CD8-positive, alpha-beta T cell (primary cell): ENCODE measurements at regions of chr20 and their contacts with region 1.

Region 1: GRCh38 chr20:50189681-50190582 is 698 bp upstream of the CEBPB start:
- DNase-seq: peak; percentile 61 to 89 (median 83)
- ATAC-seq: peak; percentile 60
- H3K4me3 ChIP-seq: peak overlapping the region; percentile 29 to 72
- H3K4me3 Mint-ChIP-seq: peak overlapping the region; percentile 65
- H3K27ac ChIP-seq: peak overlapping the region; percentile 19 to 91
- H3K27ac Mint-ChIP-seq: peak overlapping the region; percentile 45
- H3K4me1 ChIP-seq: peaks cover 19% of the 10 kb centered on the region
- H3K4me1 Mint-ChIP-seq: peaks cover 24% of the 10 kb centered on the region
- H3K27me3 ChIP-seq: no peaks in the 10 kb centered on the region
- H3K27me3 Mint-ChIP-seq: peaks cover 8% of the 10 kb centered on the region
- CTCF ChIP-seq: peak; percentile 65

Region 2: DNA sequence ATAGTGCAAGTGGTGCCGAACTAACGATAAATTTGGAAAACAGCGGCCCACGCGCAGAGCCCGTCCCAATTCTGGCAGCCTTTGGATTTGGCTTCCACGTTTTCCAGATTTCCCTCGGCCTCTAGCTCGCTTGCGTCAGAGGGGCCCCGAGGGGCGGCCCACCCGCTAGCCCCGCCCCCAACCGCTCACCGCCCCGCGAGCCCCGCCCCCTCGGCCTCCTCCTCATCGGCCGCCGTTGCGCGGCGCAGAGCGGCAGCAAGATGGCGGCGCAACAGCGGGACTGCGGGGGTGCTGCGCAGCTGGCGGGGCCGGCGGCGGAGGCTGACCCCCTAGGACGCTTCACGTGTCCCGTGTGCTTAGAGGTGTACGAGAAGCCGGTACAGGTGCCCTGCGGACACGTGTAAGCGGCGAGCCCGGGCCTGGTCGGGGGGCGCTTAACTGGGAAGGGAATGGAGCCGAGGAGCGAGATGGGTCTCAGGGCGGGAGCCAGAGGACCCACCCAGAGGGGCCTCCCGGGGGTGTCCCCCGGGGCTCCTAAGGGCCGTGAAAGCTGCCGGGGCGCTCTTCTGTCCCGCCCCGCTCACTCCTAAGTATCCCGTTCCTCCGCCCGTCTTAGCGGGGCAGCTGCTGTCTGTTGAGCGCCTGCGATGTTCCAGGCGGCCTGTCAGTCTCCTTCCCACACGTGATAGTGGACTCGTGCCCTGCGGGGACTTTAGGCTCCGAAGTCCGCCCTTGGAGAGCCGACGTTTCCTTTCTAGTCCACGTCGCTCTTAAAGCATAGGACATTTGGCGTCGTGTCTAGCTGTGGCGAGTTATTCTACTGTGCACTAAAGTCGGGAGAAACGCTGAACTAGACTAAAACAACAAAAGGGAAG is 253.5 kb before region 1 on chr20 and contains the start of gene RNF114:
- CTCF ChIA-PET with region 1: no interaction called
- POLR2A ChIA-PET with region 1: no interaction called
- intact Hi-C with region 1: loop called in 1 of 2 experiments (anchors 1 kb)
- DNase-seq: peak; percentile 82 to 95 (median 90)
- ATAC-seq: peak; percentile 96
- H3K4me3 ChIP-seq: peak within 1 kb of the TSS; percentile 96 to 99
- H3K4me3 Mint-ChIP-seq: peak within 1 kb of the TSS; percentile 98
- H3K27ac ChIP-seq: peak within 1 kb of the TSS; percentile 89 to 95
- H3K27ac Mint-ChIP-seq: peak within 1 kb of the TSS; percentile 96
- H3K4me1 ChIP-seq: peaks cover 30% of the 10 kb centered on the region
- H3K4me1 Mint-ChIP-seq: peaks cover 46% of the 10 kb centered on the region
- H3K27me3 ChIP-seq: no peaks in the 10 kb centered on the region
- H3K27me3 Mint-ChIP-seq: no peaks in the 10 kb centered on the region
- CTCF ChIP-seq: no peak
- total RNA-seq, gene RNF114: 137 to 151 TPM

Region 3: DNA sequence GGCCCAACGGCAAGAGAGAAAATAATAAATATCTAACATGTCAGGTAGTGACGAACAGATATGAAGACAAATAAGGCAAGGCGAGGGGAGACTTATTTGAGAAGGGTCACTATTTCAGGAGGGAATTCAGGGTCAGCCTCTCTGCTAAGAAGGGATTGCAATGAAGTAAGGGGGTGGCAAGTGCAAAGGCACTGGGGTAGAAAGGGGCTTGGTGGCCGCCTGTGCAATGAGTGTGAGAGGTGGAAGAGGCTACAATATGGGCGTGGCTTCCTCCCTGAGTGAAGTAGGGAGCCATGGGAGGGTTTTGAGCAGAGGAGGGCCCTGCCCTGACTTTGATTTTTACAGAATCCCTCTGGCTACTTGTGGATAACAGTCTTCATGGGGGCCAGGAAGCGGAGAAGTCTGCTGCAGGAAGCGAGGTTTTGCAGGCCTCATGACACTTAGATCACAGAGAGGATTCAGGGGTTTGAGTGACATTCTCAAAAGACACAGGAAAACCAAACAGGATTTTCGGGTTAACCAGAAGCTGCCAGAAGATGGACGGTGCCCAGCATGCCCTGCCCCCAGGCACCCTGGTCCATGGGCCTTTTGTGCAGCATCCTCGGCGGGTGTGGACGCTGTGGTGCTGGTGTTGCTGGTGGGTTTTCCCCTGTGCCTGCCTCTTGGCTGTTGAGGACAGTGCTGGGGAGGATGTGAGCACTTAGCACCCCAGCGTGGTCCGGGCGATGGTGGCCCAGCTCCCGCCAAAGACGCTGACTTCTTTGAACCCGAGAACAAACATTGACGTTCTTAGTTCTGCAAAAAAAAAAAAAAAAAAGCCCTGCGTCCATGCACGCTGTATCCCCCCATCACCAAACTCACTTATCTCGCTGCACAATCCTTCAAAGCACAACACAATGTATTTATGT is 196.1 kb after region 1 on chr20:
- CTCF ChIA-PET with region 1: no interaction called
- POLR2A ChIA-PET with region 1: interaction called, 3 read pairs
- intact Hi-C with region 1: loop called (anchors 2 kb)
- DNase-seq: peak; percentile 37 to 94 (median 66)
- ATAC-seq: peak; percentile 87
- H3K4me3 ChIP-seq: peak overlapping the region in 1 of 2 experiments; percentile 17
- H3K4me3 Mint-ChIP-seq: peak overlapping the region; percentile 43
- H3K27ac ChIP-seq: peak overlapping the region in 1 of 2 experiments; percentile 61
- H3K27ac Mint-ChIP-seq: peak overlapping the region; percentile 64
- H3K4me1 ChIP-seq: peaks cover 41% of the 10 kb centered on the region
- H3K4me1 Mint-ChIP-seq: peaks cover 63% of the 10 kb centered on the region
- H3K27me3 ChIP-seq: no peaks in the 10 kb centered on the region
- H3K27me3 Mint-ChIP-seq: peaks cover 4% of the 10 kb centered on the region
- CTCF ChIP-seq: no peak

Region 4: GRCh38 chr20:50509935-50510705 is 320.2 kb after region 1 on chr20 and contains the start of gene PTPN1:
- CTCF ChIA-PET with region 1: interaction called, 3 read pairs
- POLR2A ChIA-PET with region 1: no interaction called
- intact Hi-C with region 1: loop called (anchors 1 kb)
- DNase-seq: peak; percentile 97 to 99 (median 99)
- ATAC-seq: peak; percentile 95
- H3K4me3 ChIP-seq: peak within 1 kb of the TSS; percentile 80 to 100
- H3K4me3 Mint-ChIP-seq: peak within 1 kb of the TSS; percentile 95
- H3K27ac ChIP-seq: peak within 1 kb of the TSS; percentile 91 to 94
- H3K27ac Mint-ChIP-seq: peak within 1 kb of the TSS; percentile 99
- H3K4me1 ChIP-seq: peaks cover 45% of the 10 kb centered on the region
- H3K4me1 Mint-ChIP-seq: peaks cover 52% of the 10 kb centered on the region
- H3K27me3 ChIP-seq: no peaks in the 10 kb centered on the region
- H3K27me3 Mint-ChIP-seq: no peaks in the 10 kb centered on the region
- CTCF ChIP-seq: no peak
- total RNA-seq, gene PTPN1: 96.0 to 97.5 TPM

Region 5: GRCh38 chr20:50635667-50636503 is 446.0 kb after region 1 on chr20:
- CTCF ChIA-PET with region 1: interaction called, 3 read pairs
- POLR2A ChIA-PET with region 1: no interaction called
- intact Hi-C with region 1: loop called in 1 of 2 experiments (anchors 5 kb)
- DNase-seq: peak; percentile 6 to 59 (median 40)
- ATAC-seq: peak; percentile 61
- H3K4me3 ChIP-seq: no peak overlapping the region
- H3K4me3 Mint-ChIP-seq: no peak overlapping the region
- H3K27ac ChIP-seq: no peak overlapping the region
- H3K27ac Mint-ChIP-seq: no peak overlapping the region
- H3K4me1 ChIP-seq: no peaks in the 10 kb centered on the region
- H3K4me1 Mint-ChIP-seq: no peaks in the 10 kb centered on the region
- H3K27me3 ChIP-seq: no peaks in the 10 kb centered on the region
- H3K27me3 Mint-ChIP-seq: peaks cover 2% of the 10 kb centered on the region
- CTCF ChIP-seq: peak; percentile 45

Region 6: DNA sequence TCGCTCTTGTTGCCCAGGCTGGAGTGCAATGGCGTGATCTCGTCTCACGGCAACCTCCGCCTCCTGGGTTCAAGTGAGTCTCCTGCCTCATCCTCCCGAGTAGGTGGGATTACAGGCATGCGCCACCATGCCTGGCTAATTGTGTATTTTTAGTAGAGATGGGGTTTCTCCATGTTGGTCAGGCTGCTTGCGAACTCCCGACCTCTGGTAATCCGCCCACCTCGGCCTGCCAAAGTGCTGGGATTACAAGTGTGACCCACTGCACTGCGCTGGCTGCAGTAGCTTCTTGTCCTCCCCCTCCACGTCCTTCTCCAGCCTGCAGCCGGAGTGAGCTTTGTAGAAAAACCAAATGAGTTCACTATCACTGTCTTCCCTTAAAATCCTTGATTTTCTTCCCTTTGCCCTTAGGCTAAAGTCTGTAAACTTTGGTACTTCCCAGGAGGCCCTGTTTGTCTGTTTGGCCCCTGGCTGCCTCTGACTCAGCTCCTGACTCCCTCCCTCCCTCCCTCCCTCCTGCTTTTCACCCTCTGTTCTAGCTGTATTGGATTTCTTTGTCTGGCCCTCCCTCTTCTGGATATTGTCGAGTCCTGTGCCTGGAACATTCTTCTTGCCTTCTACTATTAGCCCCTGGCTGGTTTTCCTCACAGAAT is 554.3 kb after region 1 on chr20:
- CTCF ChIA-PET with region 1: interaction called, 4 read pairs
- POLR2A ChIA-PET with region 1: no interaction called
- intact Hi-C with region 1: loop called (anchors 1 to 5 kb)
- DNase-seq: no peak
- ATAC-seq: no peak
- H3K4me3 ChIP-seq: no peak overlapping the region
- H3K4me3 Mint-ChIP-seq: no peak overlapping the region
- H3K27ac ChIP-seq: no peak overlapping the region
- H3K27ac Mint-ChIP-seq: no peak overlapping the region
- H3K4me1 ChIP-seq: no peaks in the 10 kb centered on the region
- H3K4me1 Mint-ChIP-seq: peaks cover 23% of the 10 kb centered on the region
- H3K27me3 ChIP-seq: no peaks in the 10 kb centered on the region
- H3K27me3 Mint-ChIP-seq: no peaks in the 10 kb centered on the region
- CTCF ChIP-seq: no peak